Caco-2 (cell line): ENCODE measurements at regions of chr14 and their contacts with region 1.

Region 1: DNA sequence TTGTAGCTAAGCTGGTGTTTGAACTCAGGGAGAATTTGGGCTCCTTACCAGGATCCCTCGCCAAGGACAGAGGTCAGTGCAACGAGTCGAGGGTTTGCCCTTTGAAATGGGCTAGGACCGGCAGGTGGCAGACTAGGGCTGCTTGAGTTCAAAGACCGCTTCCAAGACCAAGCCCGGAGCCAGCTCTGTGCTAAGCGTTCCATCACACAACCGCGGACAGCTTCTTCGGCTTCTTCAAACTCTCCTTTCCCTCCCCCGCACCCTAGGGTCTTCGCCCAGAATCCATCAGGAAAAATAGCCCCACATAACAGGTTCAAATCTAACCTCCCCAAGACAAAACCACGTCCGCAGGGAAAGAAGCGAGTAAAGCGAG is 705 bp upstream of the FLVCR2 start:
- DNase-seq: peak; percentile 87
- H3K4me3 ChIP-seq: peak overlapping the region; percentile 61
- H3K4me3 Mint-ChIP-seq: no peak overlapping the region
- H3K27ac Mint-ChIP-seq: peak overlapping the region; percentile 78
- H3K4me1 ChIP-seq: peaks cover 15% of the 10 kb centered on the region
- H3K4me1 Mint-ChIP-seq: peaks cover 8% of the 10 kb centered on the region
- H3K27me3 ChIP-seq: no peaks in the 10 kb centered on the region
- H3K27me3 Mint-ChIP-seq: peaks cover 4% of the 10 kb centered on the region
- CTCF ChIP-seq: peak; percentile 68 to 84

Region 2: GRCh38 chr14:75560962-75561432 is 16.7 kb before region 1 on chr14:
- CTCF ChIA-PET with region 1: interaction called, 22 read pairs
- POLR2A ChIA-PET with region 1: no interaction called
- intact Hi-C with region 1: no loop called
- DNase-seq: peak; percentile 87 to 90
- H3K4me3 ChIP-seq: no peak overlapping the region
- H3K4me3 Mint-ChIP-seq: no peak overlapping the region
- H3K27ac Mint-ChIP-seq: no peak overlapping the region
- H3K4me1 ChIP-seq: peaks cover 16% of the 10 kb centered on the region
- H3K4me1 Mint-ChIP-seq: peaks cover 29% of the 10 kb centered on the region
- H3K27me3 ChIP-seq: no peaks in the 10 kb centered on the region
- H3K27me3 Mint-ChIP-seq: peaks cover 3% of the 10 kb centered on the region
- CTCF ChIP-seq: peak; percentile 82 to 87

Region 3: DNA sequence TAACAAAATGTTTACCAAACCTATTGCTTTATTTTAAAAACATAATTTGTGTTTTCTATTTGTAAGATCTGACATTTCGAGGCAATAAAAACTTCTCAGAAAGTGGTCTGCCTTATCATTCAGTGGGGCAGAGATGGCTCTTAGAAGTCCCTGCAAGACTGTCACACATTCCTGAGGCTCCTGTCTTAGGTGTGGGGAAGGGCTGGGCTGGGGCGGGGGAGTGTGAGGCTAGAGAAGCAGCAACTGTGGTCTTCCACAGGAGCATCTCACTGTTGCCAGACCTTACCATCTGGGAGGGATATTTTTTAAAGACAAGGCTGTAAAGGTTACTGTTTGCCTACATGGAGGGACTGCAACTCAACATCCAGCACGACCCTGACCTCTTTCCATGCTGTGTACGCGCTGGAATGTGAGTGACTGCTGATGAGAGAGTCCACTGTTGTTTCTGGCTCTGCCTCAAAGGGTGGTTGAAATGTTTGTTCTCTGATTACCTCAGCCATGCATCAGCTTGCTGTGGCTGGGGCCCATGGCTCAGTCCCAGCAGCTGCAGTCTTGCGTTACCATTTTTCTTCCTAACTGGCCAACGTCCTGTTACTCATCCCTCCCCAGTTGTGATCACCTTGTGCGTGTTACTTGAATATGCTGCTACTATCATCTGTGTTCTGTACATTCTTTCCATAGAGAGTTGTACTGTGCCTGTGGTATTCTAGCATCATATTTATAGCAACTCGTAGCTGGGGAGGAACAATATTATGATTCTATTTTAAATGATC is 70.5 kb after region 1 on chr14:
- CTCF ChIA-PET with region 1: interaction called, 106 read pairs
- POLR2A ChIA-PET with region 1: interaction called, 3 read pairs
- intact Hi-C with region 1: loop called (anchors 1 kb)
- DNase-seq: peak; percentile 81 to 87
- H3K4me3 ChIP-seq: no peak overlapping the region
- H3K4me3 Mint-ChIP-seq: peak overlapping the region; percentile 35
- H3K27ac Mint-ChIP-seq: peak overlapping the region; percentile 90
- H3K4me1 ChIP-seq: peaks cover 55% of the 10 kb centered on the region
- H3K4me1 Mint-ChIP-seq: peaks cover 40% of the 10 kb centered on the region
- H3K27me3 ChIP-seq: no peaks in the 10 kb centered on the region
- H3K27me3 Mint-ChIP-seq: no peaks in the 10 kb centered on the region
- CTCF ChIP-seq: no peak

Region 4: DNA sequence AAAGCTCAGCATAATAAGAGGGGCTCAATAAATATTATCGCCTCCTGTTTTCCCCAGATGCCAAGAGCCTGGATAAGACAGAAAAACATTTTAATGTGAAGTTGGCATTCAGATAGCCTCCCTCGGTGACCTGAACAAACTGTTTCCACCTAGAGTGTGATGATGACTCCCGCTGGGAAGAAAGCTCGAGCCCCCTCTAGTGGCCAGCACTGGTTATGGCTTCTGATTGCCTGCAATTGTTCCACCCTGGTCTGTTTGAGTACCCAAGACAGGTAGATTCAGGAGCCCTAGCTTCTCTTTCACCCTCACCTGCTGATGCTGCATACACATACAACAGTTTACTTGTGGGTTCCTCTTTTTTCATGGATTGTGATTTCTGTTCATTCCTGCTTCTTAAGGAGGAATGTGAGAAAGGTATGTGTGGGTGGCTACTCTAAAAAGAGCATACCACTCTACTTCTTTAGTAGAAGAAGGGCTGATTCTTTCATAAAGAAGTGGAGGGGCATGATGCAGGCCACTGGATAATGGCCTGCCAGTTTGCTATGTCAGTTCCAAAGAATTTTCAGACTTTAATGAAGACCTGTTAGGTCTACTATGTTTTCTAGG is 76.5 kb after region 1 on chr14:
- CTCF ChIA-PET with region 1: interaction called, 106 read pairs
- POLR2A ChIA-PET with region 1: interaction called, 10 read pairs
- intact Hi-C with region 1: loop called (anchors 1 kb)
- DNase-seq: peak; percentile 76 to 86
- H3K4me3 ChIP-seq: no peak overlapping the region
- H3K4me3 Mint-ChIP-seq: no peak overlapping the region
- H3K27ac Mint-ChIP-seq: no peak overlapping the region
- H3K4me1 ChIP-seq: peaks cover 21% of the 10 kb centered on the region
- H3K4me1 Mint-ChIP-seq: peaks cover 26% of the 10 kb centered on the region
- H3K27me3 ChIP-seq: no peaks in the 10 kb centered on the region
- H3K27me3 Mint-ChIP-seq: no peaks in the 10 kb centered on the region
- CTCF ChIP-seq: peak; percentile 95 to 96

Region 5: GRCh38 chr14:75660630-75661494 is 83.1 kb after region 1 on chr14 and contains the starts of genes ERG28 and TTLL5:
- CTCF ChIA-PET with region 1: interaction called, 65 read pairs
- POLR2A ChIA-PET with region 1: interaction called, 11 read pairs
- intact Hi-C with region 1: no loop called
- DNase-seq: peak; percentile 98 to 99
- H3K4me3 ChIP-seq: peak within 1 kb of the TSS; percentile 87
- H3K4me3 Mint-ChIP-seq: peak within 1 kb of the TSS; percentile 92
- H3K27ac Mint-ChIP-seq: peak within 1 kb of the TSS; percentile 92
- H3K4me1 ChIP-seq: no peaks in the 10 kb centered on the region
- H3K4me1 Mint-ChIP-seq: no peaks in the 10 kb centered on the region
- H3K27me3 ChIP-seq: no peaks in the 10 kb centered on the region
- H3K27me3 Mint-ChIP-seq: no peaks in the 10 kb centered on the region
- CTCF ChIP-seq: no peak
- total RNA-seq, gene ERG28: 31.0 and 36.1 TPM in 2 replicates
- total RNA-seq, gene TTLL5: 38.2 and 45.3 TPM in 2 replicates

Region 6: GRCh38 chr14:75709207-75709812 is 131.6 kb after region 1 on chr14:
- CTCF ChIA-PET with region 1: interaction called, 17 read pairs
- POLR2A ChIA-PET with region 1: no interaction called
- intact Hi-C with region 1: no loop called
- DNase-seq: peak; percentile 72 to 74
- H3K4me3 ChIP-seq: no peak overlapping the region
- H3K4me3 Mint-ChIP-seq: no peak overlapping the region
- H3K27ac Mint-ChIP-seq: no peak overlapping the region
- H3K4me1 ChIP-seq: peaks cover 21% of the 10 kb centered on the region
- H3K4me1 Mint-ChIP-seq: peaks cover 24% of the 10 kb centered on the region
- H3K27me3 ChIP-seq: no peaks in the 10 kb centered on the region
- H3K27me3 Mint-ChIP-seq: no peaks in the 10 kb centered on the region
- CTCF ChIP-seq: peak; percentile 69 to 76

Region 7: DNA sequence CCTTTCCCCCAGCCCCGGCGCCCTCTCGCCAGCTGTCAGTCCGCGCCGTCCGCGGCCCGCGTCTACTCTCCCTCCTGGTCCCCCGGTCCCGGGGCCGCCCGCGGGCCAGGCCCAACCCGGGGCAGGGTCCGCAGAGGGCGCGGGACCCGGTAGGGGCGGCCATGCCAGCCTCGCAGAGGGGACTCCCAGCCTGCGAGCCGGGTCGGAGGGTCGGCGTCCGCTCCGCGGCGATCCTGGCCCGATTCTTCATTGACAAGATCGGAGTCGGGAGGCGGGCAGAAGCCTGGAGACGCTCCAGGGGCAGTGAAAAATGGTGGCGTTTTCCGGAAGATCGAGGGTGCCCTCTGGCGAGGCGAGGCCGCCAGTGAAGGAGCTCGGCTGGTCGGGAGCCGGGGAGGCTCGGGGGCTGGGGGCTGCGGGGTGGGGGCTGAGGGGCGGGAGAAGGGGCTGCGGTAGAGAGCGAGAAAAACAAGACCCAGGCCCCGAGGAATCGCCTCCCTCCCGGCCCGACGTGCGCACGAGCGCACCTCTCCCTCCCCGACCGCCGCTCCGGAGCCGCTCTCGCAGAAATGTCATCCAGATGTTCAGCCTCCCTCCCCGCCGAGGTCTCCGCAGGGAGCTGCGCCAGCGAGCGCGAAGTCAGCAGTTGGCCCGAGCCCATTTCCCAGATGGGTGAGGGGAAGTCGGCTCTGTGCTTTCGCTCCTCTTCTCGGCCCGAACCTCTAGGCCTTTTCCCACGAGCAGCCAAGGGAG is 404.7 kb after region 1 on chr14:
- CTCF ChIA-PET with region 1: interaction called, 19 read pairs
- POLR2A ChIA-PET with region 1: no interaction called
- intact Hi-C with region 1: loop called (anchors 5 kb)
- DNase-seq: peak; percentile 78 to 89
- H3K4me3 ChIP-seq: peak overlapping the region; percentile 56
- H3K4me3 Mint-ChIP-seq: peak overlapping the region; percentile 79
- H3K27ac Mint-ChIP-seq: peak overlapping the region; percentile 39
- H3K4me1 ChIP-seq: peaks cover 8% of the 10 kb centered on the region
- H3K4me1 Mint-ChIP-seq: peaks cover 34% of the 10 kb centered on the region
- H3K27me3 ChIP-seq: no peaks in the 10 kb centered on the region
- H3K27me3 Mint-ChIP-seq: no peaks in the 10 kb centered on the region
- CTCF ChIP-seq: peak; percentile 77 to 78

Region 8: GRCh38 chr14:76396714-76397187 is 819.0 kb after region 1 on chr14:
- CTCF ChIA-PET with region 1: no interaction called
- POLR2A ChIA-PET with region 1: no interaction called
- intact Hi-C with region 1: no loop called
- DNase-seq: no peak
- H3K4me3 ChIP-seq: no peak overlapping the region
- H3K4me3 Mint-ChIP-seq: no peak overlapping the region
- H3K27ac Mint-ChIP-seq: no peak overlapping the region
- H3K4me1 ChIP-seq: no peaks in the 10 kb centered on the region
- H3K4me1 Mint-ChIP-seq: no peaks in the 10 kb centered on the region
- H3K27me3 ChIP-seq: no peaks in the 10 kb centered on the region
- H3K27me3 Mint-ChIP-seq: peaks cover 3% of the 10 kb centered on the region
- CTCF ChIP-seq: no peak